ENCODE measurements at regions of chr4 and their contacts with region 1.

Region 1: GRCh38 chr4:98474408-98474844 is 184.0 kb downstream of the TSPAN5 start:
- DNase-seq: no peak
- H3K4me3 ChIP-seq: no peak overlapping the region
- H3K27ac ChIP-seq: no peak overlapping the region
- H3K4me1 ChIP-seq: no peaks in the 10 kb centered on the region
- H3K27me3 ChIP-seq: no peaks in the 10 kb centered on the region
- CTCF ChIP-seq: no peak
- EP300 ChIP-seq: no peak
- POLR2A ChIP-seq: no peak

Region 2: GRCh38 chr4:98260579-98261290 is 213.7 kb before region 1 on chr4:
- intact Hi-C with region 1: no loop called
- DNase-seq: peak; percentile 97
- H3K4me3 ChIP-seq: peak overlapping the region; percentile 68 to 97 (median 85)
- H3K27ac ChIP-seq: peak overlapping the region; percentile 97 to 98 (median 98)
- H3K4me1 ChIP-seq: peaks cover 0 to 36% (median 25%) of the 10 kb centered on the region in 4 donors
- H3K27me3 ChIP-seq: no peaks in the 10 kb centered on the region
- CTCF ChIP-seq: no peak
- EP300 ChIP-seq: no peak
- POLR2A ChIP-seq: peak; percentile 92 to 93

Region 3: DNA sequence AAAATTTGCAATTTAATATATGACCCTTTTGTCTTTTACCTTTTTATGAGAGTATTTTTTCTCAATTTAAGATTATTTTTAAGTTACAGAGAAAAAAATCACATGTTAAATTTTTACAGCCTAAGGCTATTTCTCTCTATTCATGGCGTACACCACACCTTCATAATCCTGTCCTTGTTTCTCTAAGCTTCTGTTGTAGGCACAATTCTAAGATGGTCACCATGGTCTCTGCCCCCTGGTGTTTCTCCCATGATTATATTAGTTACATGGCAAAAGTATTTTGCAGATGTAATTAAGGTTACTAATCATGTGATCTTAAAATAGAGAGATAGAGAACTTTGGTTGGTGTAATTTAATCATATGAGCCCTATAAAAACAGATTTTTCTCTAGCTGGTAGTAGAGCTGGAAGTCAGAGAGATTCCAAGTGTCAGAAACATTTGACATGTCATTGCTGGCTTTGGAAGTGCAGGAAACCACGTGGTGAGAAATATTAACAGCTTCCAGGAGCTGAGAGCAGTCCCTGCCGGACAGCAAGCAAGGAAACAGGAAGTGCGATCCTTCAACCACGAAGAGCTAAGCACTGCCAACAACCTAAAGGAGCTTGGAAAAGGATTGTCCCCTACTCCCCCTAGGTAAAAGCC is 364.7 kb after region 1 on chr4:
- intact Hi-C with region 1: loop called (anchors 10 kb)
- DNase-seq: no peak
- H3K4me3 ChIP-seq: no peak overlapping the region
- H3K27ac ChIP-seq: no peak overlapping the region
- H3K4me1 ChIP-seq: no peaks in the 10 kb centered on the region
- H3K27me3 ChIP-seq: no peaks in the 10 kb centered on the region
- CTCF ChIP-seq: no peak
- EP300 ChIP-seq: no peak
- POLR2A ChIP-seq: no peak